BJ (cell line): ENCODE measurements at regions of chr3 and their contacts with region 1.

Region 1: DNA sequence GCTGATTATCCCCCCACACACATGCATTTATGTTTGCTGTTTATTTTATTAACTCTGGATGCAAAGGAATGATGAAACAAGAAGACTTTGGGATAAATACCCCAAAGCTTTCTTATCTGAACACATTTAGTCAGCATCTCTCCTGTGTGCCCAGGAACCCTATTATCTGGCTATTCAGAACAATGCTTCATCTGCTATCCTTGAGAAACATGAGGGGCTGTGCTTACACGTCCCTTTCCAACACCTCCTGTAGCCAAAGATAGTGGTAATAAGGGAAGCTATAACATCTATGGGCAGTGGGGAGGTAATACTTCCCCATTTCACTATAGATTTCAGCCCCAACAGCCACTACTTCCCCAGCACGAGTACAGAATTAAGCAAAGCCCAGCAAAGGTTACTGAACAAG is 94.7 kb downstream of the SSR3 start:
- DNase-seq: no peak
- H3K4me3 ChIP-seq: no peak overlapping the region
- H3K27me3 ChIP-seq: no peaks in the 10 kb centered on the region
- CTCF ChIP-seq: no peak

Region 2: DNA sequence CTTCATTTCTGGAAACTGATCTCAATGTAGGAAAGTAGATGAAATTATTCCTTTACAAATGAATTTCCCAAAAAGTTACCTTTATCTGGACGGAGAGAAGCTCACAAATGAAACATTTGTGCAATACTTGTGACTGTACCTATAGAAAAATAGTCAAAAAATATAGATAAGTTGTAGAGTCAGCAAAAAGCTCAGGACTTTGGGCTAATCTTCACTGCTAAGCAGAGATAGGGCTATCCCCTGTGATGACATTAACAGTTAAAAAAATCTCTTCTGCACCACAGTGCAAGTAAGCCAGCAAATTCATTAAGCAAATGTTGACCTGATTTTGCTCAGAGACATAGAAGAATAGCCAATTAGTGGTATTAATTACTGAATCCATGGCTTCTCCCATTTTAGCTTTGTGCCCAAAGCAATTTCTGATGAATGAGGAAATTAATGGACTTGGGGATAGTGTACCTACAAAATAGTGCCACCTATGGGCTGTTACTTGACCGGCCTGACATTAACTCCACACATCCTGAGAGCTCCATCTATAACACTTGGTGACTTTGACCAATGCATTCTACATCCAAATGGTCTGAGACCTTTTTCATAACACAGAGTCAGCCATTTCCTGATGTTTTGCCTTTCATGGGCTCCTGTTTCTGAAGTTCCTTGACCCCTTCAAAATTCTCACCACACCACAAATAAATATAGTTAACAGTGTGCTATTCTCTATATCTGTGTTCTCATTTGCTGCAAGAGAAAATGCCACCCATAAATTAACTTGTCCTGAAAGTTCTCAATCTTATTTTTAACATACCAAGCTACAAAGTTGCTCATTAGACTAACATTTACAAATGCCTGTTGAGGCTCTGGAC is 10.3 kb before region 1 on chr3:
- CTCF ChIA-PET with region 1: interaction called, 20 read pairs
- POLR2A ChIA-PET with region 1: no interaction called
- DNase-seq: no peak
- H3K4me3 ChIP-seq: no peak overlapping the region
- H3K27me3 ChIP-seq: peaks cover 3% of the 10 kb centered on the region
- CTCF ChIP-seq: peak; percentile 61

Region 3: GRCh38 chr3:156865732-156866131 is 405.5 kb after region 1 on chr3:
- CTCF ChIA-PET with region 1: no interaction called
- POLR2A ChIA-PET with region 1: no interaction called
- DNase-seq: no peak
- H3K4me3 ChIP-seq: no peak overlapping the region
- H3K27me3 ChIP-seq: no peaks in the 10 kb centered on the region
- CTCF ChIP-seq: peak; percentile 26; the same call in 1 of the 2 replicates